ENCODE measurements at regions of chr21 and their contacts with region 1.

Region 1: GRCh38 chr21:38831526-38832467 is 26.1 kb downstream of the ETS2 start:
- DNase-seq: peak in 6 of 9 donors; percentile 14 to 52 (median 31)
- ATAC-seq: peak; percentile 90
- H3K4me3 ChIP-seq: no peak overlapping the region
- H3K4me3 Mint-ChIP-seq: peak overlapping the region in 1 of 10 donors; percentile 11
- H3K27ac ChIP-seq: no peak overlapping the region
- H3K27ac Mint-ChIP-seq: peak overlapping the region in 3 of 9 donors; percentile 24 to 28 (median 24)
- H3K4me1 ChIP-seq: no peaks in the 10 kb centered on the region
- H3K4me1 Mint-ChIP-seq: peaks cover 11 to 17% (median 13%) of the 10 kb centered on the region in 7 donors
- H3K27me3 ChIP-seq: no peaks in the 10 kb centered on the region
- H3K27me3 Mint-ChIP-seq: peaks cover 0 to 7% (median 4%) of the 10 kb centered on the region in 5 donors

Region 2: DNA sequence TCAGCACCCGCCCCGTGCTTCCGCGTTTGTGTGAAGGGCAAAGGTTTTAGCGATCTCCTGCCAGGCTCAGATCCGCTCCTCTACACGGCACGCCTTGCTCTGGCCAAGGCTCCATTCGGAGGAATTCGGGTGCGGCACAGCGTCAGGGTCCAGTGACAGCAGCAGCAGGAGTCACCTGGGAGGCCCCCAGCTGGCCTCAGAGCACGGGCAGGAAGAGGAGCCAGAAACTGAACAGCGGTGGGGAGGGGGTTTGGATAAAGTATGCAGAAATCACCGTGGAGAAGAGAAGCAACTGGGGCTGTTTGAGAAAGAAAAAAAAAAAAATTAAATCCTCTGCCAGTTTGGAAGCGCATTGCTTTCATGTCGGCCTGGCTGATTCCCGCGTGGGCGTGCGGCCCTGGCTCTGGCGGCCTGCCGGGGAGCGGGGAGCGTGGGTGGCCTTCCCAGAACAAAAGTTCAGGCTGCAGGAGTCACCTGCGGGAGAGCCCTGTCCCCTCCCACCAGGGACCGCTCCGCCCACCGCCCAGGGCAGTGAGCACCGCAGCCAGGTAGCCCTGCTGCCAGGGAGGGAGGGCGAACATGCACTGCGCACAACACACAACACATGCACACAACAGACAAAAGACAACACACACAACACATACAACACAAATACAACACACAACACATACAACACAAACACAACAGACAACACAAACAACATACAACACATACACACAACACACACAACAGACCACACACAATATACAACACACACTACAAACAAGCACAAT is 81.5 kb after region 1 on chr21:
- CTCF ChIA-PET with region 1: no interaction called
- POLR2A ChIA-PET with region 1: no interaction called
- intact Hi-C with region 1: loop called in 1 of 2 experiments (anchors 10 kb)
- DNase-seq: peak in 1 of 9 donors; percentile 2
- ATAC-seq: peak; percentile 34
- H3K4me3 ChIP-seq: no peak overlapping the region
- H3K4me3 Mint-ChIP-seq: peak overlapping the region in 2 of 10 donors; percentile 23 to 32
- H3K27ac ChIP-seq: no peak overlapping the region
- H3K27ac Mint-ChIP-seq: peak overlapping the region in 1 of 9 donors; percentile 51
- H3K4me1 ChIP-seq: no peaks in the 10 kb centered on the region
- H3K4me1 Mint-ChIP-seq: peaks cover 0 to 4% (median 0%) of the 10 kb centered on the region in 7 donors
- H3K27me3 ChIP-seq: no peaks in the 10 kb centered on the region
- H3K27me3 Mint-ChIP-seq: peaks cover 6 to 15% (median 12%) of the 10 kb centered on the region in 5 donors

Region 3: DNA sequence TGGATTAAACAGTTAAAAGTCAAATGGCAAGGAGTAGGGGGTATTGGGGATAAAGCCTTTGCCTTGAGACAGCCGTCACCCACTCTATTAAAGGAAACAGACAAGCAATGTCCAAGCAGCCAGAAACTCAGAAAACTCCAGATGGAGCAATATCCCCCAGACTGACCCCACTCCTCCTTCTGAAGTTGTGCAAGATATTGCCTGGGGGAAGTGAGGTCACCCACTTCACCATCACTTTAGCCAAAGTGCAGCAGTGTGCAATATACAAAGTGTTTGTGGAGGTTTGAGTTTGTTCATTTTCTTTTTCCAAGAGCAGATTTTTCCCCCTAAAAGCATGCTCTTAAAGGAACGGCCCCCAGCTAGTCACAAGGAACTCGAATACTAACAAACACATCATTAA is 99.1 kb after region 1 on chr21:
- CTCF ChIA-PET with region 1: no interaction called
- POLR2A ChIA-PET with region 1: no interaction called
- intact Hi-C with region 1: no loop called
- DNase-seq: no peak
- ATAC-seq: peak; percentile 70
- H3K4me3 ChIP-seq: no peak overlapping the region
- H3K4me3 Mint-ChIP-seq: no peak overlapping the region
- H3K27ac ChIP-seq: no peak overlapping the region
- H3K27ac Mint-ChIP-seq: no peak overlapping the region
- H3K4me1 ChIP-seq: no peaks in the 10 kb centered on the region
- H3K4me1 Mint-ChIP-seq: peaks cover 0 to 12% (median 0%) of the 10 kb centered on the region in 7 donors
- H3K27me3 ChIP-seq: no peaks in the 10 kb centered on the region
- H3K27me3 Mint-ChIP-seq: peaks cover 0 to 9% (median 8%) of the 10 kb centered on the region in 5 donors

Measured in naive thymus-derived CD4-positive, alpha-beta T cell (primary cell).